Motor neuron (in vitro differentiated cells): ENCODE measurements at regions of chr2 and their contacts with region 1.

Region 1: DNA sequence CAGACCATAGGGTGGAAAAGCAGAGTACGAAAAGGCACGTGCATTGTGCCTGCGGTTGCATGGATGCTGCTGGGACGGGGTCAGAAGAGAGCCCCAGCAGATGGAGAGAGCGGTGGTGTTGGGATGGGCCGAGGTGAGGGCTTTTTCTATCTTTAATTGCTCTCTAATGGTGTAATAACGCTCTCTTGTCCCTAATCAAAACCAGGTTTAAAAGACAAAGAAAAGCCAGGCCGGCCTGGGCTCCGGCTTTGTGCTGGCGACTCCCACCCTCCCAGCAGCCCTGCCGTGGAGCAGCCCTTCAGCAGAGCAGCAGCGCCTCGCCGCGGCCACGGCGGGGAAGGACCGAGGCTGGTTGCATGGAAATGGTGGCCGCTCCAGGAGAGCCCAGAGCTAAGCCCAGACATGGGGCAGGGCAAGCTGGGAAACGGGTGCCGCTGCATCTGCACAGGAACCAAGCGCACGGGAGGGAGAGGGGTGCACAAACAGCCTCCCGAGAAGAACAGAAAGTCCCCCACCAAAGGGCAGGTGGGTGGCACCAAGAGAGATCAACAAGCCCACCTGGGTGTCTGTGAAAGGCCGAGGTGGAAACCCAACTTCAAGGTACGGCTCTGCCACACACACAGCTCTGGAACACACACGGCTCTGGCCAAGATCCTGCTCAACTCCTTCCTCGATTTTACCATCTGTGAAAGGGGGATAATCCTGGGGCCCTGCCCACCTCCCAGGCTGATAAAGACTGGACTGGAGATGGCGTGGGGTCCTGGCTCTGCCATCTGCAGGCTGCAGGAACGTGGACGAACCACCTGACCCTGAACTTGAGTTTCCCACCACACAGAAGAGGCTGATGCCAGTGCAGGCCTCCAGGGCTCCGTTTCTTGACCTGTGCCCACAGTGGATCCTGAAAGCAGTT is 15.0 kb downstream of the HS1BP3 start:
- ATAC-seq: peak; percentile 97 to 99 (median 98)
- H3K4me3 ChIP-seq: peak overlapping the region in 1 of 5 donors; percentile 8
- H3K27ac ChIP-seq: peak overlapping the region in 1 of 2 donors; percentile 37
- H3K4me1 ChIP-seq: peaks cover 13% of the 10 kb centered on the region in 2 donors

Region 2: GRCh38 chr2:20282916-20283592 is 352.9 kb before region 1 on chr2:
- in situ Hi-C with region 1: no loop called
- ATAC-seq: peak in 3 of 8 experiments; percentile 33 to 82 (median 56)
- H3K4me3 ChIP-seq: no peak overlapping the region
- H3K27ac ChIP-seq: no peak overlapping the region
- H3K4me1 ChIP-seq: no peaks in the 10 kb centered on the region

Region 3: GRCh38 chr2:20391951-20392699 is 243.8 kb before region 1 on chr2:
- in situ Hi-C with region 1: loop called in 1 of 9 experiments (anchors 10 kb)
- ATAC-seq: peak; percentile 47 to 95 (median 90)
- H3K4me3 ChIP-seq: no peak overlapping the region
- H3K27ac ChIP-seq: no peak overlapping the region
- H3K4me1 ChIP-seq: no peaks in the 10 kb centered on the region

Region 4: DNA sequence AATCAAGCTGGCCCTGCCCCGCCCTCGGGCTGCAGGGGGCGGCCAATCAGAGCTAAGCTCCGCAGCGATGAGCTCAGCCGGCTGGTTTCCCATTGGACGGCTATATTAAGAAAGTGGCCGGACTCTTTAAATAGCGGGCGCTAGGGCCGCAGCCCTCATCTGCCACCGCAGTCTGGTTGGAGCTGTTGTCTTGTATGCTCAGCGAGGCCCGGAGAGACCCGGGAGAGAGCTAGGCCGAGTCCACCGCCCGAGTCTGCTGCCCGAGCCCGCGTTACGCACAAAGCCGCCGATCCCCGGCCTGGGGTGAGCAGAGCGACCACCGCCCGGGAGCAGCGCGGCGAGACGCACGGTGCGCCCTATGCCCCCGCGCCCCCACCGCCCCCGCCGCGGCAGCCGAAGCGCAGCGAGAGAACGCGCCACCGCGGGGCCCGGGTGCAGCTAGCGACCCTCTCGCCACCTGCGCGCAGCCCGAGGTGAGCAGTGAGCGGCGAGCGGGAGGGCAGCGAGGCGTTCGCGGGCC is 189.0 kb before region 1 on chr2 and contains the start of gene RHOB:
- in situ Hi-C with region 1: loop called (anchors 10 to 25 kb)
- ATAC-seq: peak; percentile 78 to 90 (median 86)
- H3K4me3 ChIP-seq: peak within 1 kb of the TSS; percentile 76 to 97 (median 83)
- H3K27ac ChIP-seq: peak within 1 kb of the TSS; percentile 97
- H3K4me1 ChIP-seq: peaks cover 21 to 25% of the 10 kb centered on the region in 2 donors
- total RNA-seq, gene RHOB: 12.1 to 280 (median 56.3) TPM